ENCODE measurements at regions of chr13 and their contacts with region 1.

Region 1: DNA sequence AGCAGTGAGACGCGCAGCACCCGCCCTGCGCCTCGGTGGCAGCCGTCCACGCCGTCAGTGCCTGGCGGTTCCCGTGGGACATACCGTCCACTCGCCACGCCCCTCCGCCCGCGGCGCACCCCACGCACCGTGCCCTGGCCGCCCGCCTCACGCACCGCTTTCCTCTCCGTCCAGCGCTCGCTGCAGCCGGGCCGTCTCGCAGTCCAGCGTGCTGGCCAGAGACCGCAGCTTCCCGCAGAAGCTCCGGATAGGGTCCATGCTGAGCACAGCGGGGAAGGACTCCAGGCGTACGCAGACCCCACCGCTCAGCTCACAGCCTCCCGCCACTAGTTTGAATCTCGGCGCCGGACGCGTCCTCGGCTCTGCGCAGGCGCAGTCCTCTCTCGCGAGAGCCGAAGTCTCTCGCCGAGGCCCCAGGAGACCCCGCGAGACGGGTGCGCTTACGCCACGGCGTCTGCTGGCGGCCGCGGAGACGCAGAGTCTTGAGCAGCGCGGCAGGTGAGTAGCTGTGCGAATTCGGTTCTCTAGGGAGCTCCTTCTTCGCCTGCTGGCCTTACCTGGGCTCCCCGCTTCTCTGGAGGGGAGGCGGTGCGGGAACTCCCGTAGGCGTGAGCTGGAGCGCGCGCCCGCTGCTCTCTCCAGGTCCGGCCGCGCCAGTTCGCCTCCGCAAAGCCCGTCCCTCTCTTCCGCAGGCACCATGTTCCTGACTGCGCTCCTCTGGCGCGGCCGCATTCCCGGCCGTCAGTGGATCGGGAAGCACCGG is at the starts of genes MRPL57 and SKA3:
- DNase-seq: peak; percentile 92
- ATAC-seq: peak; percentile 95
- H3K4me3 Mint-ChIP-seq: peak within 1 kb of the TSS; percentile 98
- H3K27ac Mint-ChIP-seq: peak within 1 kb of the TSS; percentile 96
- H3K4me1 Mint-ChIP-seq: peaks cover 17% of the 10 kb centered on the region
- H3K27me3 Mint-ChIP-seq: no peaks in the 10 kb centered on the region
- CTCF ChIP-seq: peak; percentile 49
- total RNA-seq, gene MRPL57: 24.8 to 25.5 TPM
- total RNA-seq, gene SKA3: 39.5 to 41.5 TPM

Region 2: GRCh38 chr13:21111546-21111945 is 64.9 kb before region 1 on chr13:
- CTCF ChIA-PET with region 1: interaction called, 11 read pairs
- POLR2A ChIA-PET with region 1: interaction called, 3 read pairs
- intact Hi-C with region 1: no loop called
- DNase-seq: no peak
- ATAC-seq: no peak
- H3K4me3 Mint-ChIP-seq: no peak overlapping the region
- H3K27ac Mint-ChIP-seq: no peak overlapping the region
- H3K4me1 Mint-ChIP-seq: no peaks in the 10 kb centered on the region
- H3K27me3 Mint-ChIP-seq: no peaks in the 10 kb centered on the region
- CTCF ChIP-seq: no peak

Region 3: GRCh38 chr13:21121616-21122015 is 54.8 kb before region 1 on chr13:
- CTCF ChIA-PET with region 1: no interaction called
- POLR2A ChIA-PET with region 1: no interaction called
- intact Hi-C with region 1: no loop called
- DNase-seq: no peak
- ATAC-seq: no peak
- H3K4me3 Mint-ChIP-seq: no peak overlapping the region
- H3K27ac Mint-ChIP-seq: no peak overlapping the region
- H3K4me1 Mint-ChIP-seq: no peaks in the 10 kb centered on the region
- H3K27me3 Mint-ChIP-seq: no peaks in the 10 kb centered on the region
- CTCF ChIP-seq: no peak

Region 4: DNA sequence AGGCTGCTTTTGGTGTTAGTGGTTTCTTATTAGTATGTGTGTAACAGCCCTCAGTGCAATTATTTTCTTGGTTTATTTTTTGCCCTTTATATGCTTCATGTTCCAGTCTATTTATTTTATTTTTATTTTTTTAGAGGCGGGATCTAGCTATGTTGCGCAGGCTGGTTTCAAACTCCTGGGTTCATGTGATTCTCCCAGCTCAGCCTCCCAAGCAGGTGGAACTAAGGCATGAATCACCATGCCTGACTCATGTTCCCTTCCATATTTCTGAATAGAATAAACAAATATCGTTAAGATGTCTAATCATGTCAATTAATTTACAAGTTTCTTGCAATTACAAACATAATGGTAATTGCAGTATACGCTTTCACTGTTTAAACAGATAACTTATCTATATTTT is 11.8 kb before region 1 on chr13:
- CTCF ChIA-PET with region 1: interaction called, 3 read pairs
- POLR2A ChIA-PET with region 1: interaction called, 10 read pairs
- intact Hi-C with region 1: no loop called
- DNase-seq: no peak
- ATAC-seq: no peak
- H3K4me3 Mint-ChIP-seq: no peak overlapping the region
- H3K27ac Mint-ChIP-seq: no peak overlapping the region
- H3K4me1 Mint-ChIP-seq: no peaks in the 10 kb centered on the region
- H3K27me3 Mint-ChIP-seq: no peaks in the 10 kb centered on the region
- CTCF ChIP-seq: no peak

Region 5: GRCh38 chr13:21297914-21298831 is 121.8 kb after region 1 on chr13:
- CTCF ChIA-PET with region 1: interaction called, 11 read pairs
- POLR2A ChIA-PET with region 1: interaction called, 5 read pairs
- intact Hi-C with region 1: no loop called
- DNase-seq: peak; percentile 87
- ATAC-seq: peak; percentile 93
- H3K4me3 Mint-ChIP-seq: peak overlapping the region; percentile 90
- H3K27ac Mint-ChIP-seq: peak overlapping the region; percentile 61
- H3K4me1 Mint-ChIP-seq: peaks cover 23% of the 10 kb centered on the region
- H3K27me3 Mint-ChIP-seq: no peaks in the 10 kb centered on the region
- CTCF ChIP-seq: peak; percentile 90

Region 6: DNA sequence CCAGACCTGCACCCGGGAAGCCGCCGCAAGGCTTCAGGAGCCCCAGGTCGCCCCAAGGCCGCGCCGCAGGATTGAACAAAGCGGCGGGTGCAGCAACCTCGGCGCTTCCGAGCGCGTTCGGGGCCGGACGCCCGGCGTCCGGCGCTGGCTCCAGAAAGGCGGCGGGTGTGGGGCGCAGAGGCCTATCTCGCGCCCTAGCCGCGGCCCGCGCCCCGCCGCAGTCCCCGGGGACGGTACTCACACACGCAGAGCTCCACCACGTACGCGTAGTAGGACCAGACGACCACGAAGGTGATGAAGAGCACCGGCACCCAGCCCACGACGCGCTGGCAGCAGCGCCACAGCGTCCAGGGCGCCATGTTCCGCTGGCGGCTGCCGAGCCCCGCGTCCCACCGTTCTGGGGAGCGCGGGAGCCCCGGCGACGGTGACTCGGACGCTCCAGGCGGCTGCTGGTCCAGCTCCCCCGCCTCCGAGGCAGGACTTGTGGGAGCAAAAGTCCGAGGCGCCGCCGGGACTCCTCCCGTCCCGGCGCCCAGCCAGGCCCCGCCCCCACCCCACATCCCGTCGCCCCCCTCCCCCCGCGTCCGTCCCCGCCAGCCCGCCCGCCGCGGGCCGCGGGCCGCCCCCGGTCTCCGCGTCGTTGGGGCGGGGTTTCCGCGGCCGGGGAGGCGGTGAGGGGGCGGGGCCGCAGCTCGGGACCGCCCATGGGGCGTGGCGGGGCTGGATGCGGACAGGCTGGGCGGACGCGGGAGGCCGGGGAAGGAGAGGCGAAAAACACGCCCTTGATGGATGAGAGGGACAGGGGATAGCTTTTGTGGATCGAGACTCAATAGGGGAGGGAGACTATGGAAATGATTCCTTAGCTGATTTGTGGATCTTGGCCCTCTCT is 282.7 kb after region 1 on chr13 and contains the start of gene ZDHHC20:
- CTCF ChIA-PET with region 1: no interaction called
- POLR2A ChIA-PET with region 1: interaction called, 15 read pairs
- intact Hi-C with region 1: no loop called
- DNase-seq: peak; percentile 87
- ATAC-seq: peak; percentile 92
- H3K4me3 Mint-ChIP-seq: peak within 1 kb of the TSS; percentile 96
- H3K27ac Mint-ChIP-seq: peak within 1 kb of the TSS; percentile 94
- H3K4me1 Mint-ChIP-seq: peaks cover 24% of the 10 kb centered on the region
- H3K27me3 Mint-ChIP-seq: no peaks in the 10 kb centered on the region
- CTCF ChIP-seq: no peak
- total RNA-seq, gene ZDHHC20: 46.1 to 50.9 TPM

Measured in activated CD8-positive, alpha-beta T cell treated with anti-CD3 and anti-CD28 coated beads for 36 hours (primary cell).